ENCODE measurements at regions of chr6 and their contacts with region 1.

Region 1: DNA sequence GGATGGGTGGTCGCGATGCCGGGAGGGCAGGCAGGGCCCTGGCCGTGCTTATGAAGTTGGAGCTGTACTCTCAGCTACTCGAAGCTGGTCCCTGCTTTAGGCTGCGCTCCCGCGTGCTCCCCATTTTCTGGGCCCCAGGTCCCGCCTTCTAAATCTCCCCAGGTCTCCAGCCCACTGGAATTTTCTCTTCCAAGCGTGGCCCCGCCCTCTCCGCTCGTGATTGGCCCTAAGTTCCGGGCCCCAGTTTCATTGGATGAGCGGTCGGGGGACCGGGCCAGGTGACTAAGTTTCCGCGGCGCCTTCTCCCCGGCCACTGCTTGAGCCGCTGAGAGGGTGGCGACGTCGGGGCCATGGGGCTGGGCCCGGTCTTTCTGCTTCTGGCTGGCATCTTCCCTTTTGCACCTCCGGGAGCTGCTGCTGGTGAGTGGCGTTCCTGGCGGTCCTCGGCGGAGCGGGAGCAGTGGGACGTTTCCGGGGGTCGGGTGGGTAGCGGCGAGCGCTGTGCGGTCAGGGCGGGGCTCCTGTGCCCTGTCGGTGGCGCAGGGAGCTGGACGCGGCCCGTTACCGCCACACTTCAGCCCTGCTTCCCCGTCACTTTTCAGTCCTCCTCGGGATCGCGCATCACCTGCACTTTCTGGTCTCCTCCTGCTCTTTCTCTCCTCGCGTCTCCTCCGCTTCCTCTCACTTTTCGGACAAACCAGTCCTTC is at the start of gene MICA:
- DNase-seq: peak; percentile 66
- H3K4me3 Mint-ChIP-seq: peak within 1 kb of the TSS; percentile 84
- H3K27ac Mint-ChIP-seq: peak within 1 kb of the TSS; percentile 84
- H3K4me1 Mint-ChIP-seq: peaks cover 54% of the 10 kb centered on the region
- H3K27me3 Mint-ChIP-seq: peaks cover 2% of the 10 kb centered on the region
- total RNA-seq, gene MICA: 11.5 and 12.4 TPM in 2 replicates

Region 2: GRCh38 chr6:31462964-31463870 is 59.8 kb after region 1 on chr6:
- intact Hi-C with region 1: loop called (anchors 1 kb)
- DNase-seq: peak; percentile 90
- H3K4me3 Mint-ChIP-seq: peak overlapping the region; percentile 100
- H3K27ac Mint-ChIP-seq: peak overlapping the region; percentile 87
- H3K4me1 Mint-ChIP-seq: peaks cover 63% of the 10 kb centered on the region
- H3K27me3 Mint-ChIP-seq: peaks cover 9% of the 10 kb centered on the region

Region 3: GRCh38 chr6:31597006-31597405 is 193.6 kb after region 1 on chr6:
- intact Hi-C with region 1: loop called (anchors 10 kb)
- DNase-seq: no peak
- H3K4me3 Mint-ChIP-seq: no peak overlapping the region
- H3K27ac Mint-ChIP-seq: no peak overlapping the region
- H3K4me1 Mint-ChIP-seq: peaks cover 52% of the 10 kb centered on the region
- H3K27me3 Mint-ChIP-seq: no peaks in the 10 kb centered on the region

Region 4: GRCh38 chr6:31660381-31661261 is 257.2 kb after region 1 on chr6 and contains the start of gene C6orf47:
- intact Hi-C with region 1: no loop called
- DNase-seq: peak; percentile 69
- H3K4me3 Mint-ChIP-seq: peak within 1 kb of the TSS; percentile 91
- H3K27ac Mint-ChIP-seq: peak within 1 kb of the TSS; percentile 80
- H3K4me1 Mint-ChIP-seq: peaks cover 79% of the 10 kb centered on the region
- H3K27me3 Mint-ChIP-seq: no peaks in the 10 kb centered on the region
- total RNA-seq, gene C6orf47: 18.1 and 19.1 TPM in 2 replicates